ENCODE measurements at regions of chrX and their contacts with region 1.

Region 1: DNA sequence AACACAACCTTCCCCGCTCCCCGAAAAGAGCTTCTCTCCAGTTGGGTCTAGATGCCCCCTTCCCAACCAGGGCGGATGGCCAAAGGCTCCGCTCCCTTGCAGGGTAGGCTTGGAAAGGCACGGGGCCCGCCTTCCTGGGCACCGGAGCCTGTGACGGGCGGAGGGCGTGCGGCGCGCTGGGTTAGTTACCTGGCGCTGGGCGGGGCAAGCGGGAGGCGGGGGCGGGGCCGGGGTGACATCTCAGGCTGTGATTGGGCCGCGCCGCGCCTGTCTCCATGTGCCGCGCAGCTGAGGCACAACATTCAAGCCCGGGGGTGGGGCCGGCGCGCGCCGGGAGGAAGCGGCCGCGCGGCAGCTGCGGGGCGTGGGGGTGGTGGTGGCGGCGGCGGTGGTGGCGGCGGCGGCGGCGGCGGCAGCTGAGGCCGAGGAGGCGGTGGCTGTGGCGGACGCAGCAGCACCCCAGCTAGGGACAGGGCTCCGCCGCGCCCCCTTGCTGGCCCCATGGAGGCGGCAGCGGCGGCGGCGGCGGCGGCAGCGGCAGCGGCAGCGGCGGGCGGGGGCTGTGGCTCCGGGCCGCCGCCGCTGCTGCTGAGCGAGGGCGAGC is at the start of gene REPS2:
- DNase-seq: peak; percentile 57
- ATAC-seq: peak; percentile 98
- H3K4me3 Mint-ChIP-seq: peak within 1 kb of the TSS; percentile 86
- H3K27ac Mint-ChIP-seq: peak within 1 kb of the TSS; percentile 59
- H3K4me1 Mint-ChIP-seq: peaks cover 10% of the 10 kb centered on the region
- H3K27me3 Mint-ChIP-seq: no peaks in the 10 kb centered on the region
- CTCF ChIP-seq: no peak
- total RNA-seq, gene REPS2: 1.6 and 2.0 TPM in 2 replicates

Region 2: DNA sequence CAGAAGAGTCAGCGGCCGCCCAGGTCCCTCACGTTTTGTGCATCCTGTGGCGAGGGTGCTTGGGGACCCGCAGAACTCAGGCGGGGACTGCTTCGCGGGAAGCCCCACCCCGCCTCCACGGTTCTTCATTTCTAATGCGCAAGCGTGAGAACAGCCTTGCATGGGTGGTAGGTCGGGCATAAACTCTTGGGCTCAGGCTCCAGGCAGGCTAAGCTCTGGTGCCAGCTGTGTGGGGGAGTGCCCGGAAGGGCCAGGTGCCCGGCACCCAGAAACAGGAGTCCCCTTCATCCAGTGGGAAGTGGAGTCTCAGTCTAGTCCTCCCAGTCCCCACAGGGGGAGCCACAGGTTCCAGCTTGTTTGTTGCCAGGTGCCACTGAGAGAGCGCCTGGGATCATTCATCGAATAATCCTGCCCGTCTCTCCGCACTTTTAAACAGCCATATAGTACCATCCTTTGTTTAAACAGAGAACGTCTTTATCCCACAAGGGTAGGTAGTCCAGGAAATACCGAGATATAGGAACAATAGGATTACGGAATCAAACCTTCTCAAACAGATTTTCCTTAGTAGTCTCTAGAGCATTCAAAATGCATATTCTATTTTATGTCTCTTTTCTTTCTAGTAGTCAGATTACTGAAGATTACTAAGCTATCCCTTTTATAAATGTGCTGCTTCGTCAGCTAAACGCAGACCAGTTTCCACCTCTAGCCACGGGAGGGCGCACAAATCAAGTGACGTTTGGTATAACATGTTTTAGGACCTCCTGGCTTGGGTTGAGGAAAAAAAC is 63.6 kb before region 1 on chrX:
- CTCF ChIA-PET with region 1: interaction called, 5 read pairs
- POLR2A ChIA-PET with region 1: no interaction called
- intact Hi-C with region 1: loop called (anchors 1 kb)
- DNase-seq: peak; percentile 47
- ATAC-seq: peak; percentile 88
- H3K4me3 Mint-ChIP-seq: peak overlapping the region; percentile 78
- H3K27ac Mint-ChIP-seq: peak overlapping the region; percentile 86
- H3K4me1 Mint-ChIP-seq: peaks cover 20% of the 10 kb centered on the region
- H3K27me3 Mint-ChIP-seq: no peaks in the 10 kb centered on the region
- CTCF ChIP-seq: peak; percentile 46

Region 3: DNA sequence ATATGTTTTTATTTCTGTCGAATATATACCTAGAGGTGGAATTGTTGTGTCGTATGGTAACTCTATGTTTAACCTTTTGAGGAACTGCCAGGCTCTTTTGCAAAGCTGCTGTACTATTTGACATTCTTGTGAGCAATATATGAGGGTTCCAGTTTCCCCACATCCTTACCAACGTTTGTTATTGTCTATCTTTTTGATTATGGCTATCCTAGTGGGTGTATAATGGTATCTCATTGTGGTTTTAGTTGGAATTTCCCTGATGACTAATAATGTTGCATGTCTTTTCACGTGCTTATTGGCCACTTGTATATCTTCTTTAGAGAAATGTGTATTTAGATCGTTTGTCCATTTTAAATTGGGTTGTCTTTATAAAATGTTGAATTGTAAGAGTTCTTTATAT is 24.5 kb after region 1 on chrX:
- CTCF ChIA-PET with region 1: no interaction called
- POLR2A ChIA-PET with region 1: no interaction called
- intact Hi-C with region 1: loop called (anchors 2 kb)
- DNase-seq: no peak
- ATAC-seq: peak; percentile 77
- H3K4me3 Mint-ChIP-seq: no peak overlapping the region
- H3K27ac Mint-ChIP-seq: no peak overlapping the region
- H3K4me1 Mint-ChIP-seq: peaks cover 25% of the 10 kb centered on the region
- H3K27me3 Mint-ChIP-seq: no peaks in the 10 kb centered on the region
- CTCF ChIP-seq: no peak

Measured in activated B cell treated with CpG ODN at 0.5 μM for 24 hours (primary cell).